CD8-positive, alpha-beta memory T cell (primary cell): ENCODE measurements at regions of chr4 and their contacts with region 1.

Region 1: GRCh38 chr4:99949034-99949998 is 759 bp downstream of the H2AZ1 start:
- DNase-seq: peak; percentile 81 to 89 (median 85)
- H3K4me3 ChIP-seq: peak overlapping the region; percentile 98
- H3K4me3 Mint-ChIP-seq: no peak overlapping the region
- H3K27ac ChIP-seq: peak overlapping the region; percentile 88
- H3K27ac Mint-ChIP-seq: no peak overlapping the region
- H3K4me1 ChIP-seq: peaks cover 37% of the 10 kb centered on the region
- H3K4me1 Mint-ChIP-seq: peaks cover 31 to 37% (median 35%) of the 10 kb centered on the region in 3 donors
- H3K27me3 ChIP-seq: no peaks in the 10 kb centered on the region
- H3K27me3 Mint-ChIP-seq: no peaks in the 10 kb centered on the region

Region 2: DNA sequence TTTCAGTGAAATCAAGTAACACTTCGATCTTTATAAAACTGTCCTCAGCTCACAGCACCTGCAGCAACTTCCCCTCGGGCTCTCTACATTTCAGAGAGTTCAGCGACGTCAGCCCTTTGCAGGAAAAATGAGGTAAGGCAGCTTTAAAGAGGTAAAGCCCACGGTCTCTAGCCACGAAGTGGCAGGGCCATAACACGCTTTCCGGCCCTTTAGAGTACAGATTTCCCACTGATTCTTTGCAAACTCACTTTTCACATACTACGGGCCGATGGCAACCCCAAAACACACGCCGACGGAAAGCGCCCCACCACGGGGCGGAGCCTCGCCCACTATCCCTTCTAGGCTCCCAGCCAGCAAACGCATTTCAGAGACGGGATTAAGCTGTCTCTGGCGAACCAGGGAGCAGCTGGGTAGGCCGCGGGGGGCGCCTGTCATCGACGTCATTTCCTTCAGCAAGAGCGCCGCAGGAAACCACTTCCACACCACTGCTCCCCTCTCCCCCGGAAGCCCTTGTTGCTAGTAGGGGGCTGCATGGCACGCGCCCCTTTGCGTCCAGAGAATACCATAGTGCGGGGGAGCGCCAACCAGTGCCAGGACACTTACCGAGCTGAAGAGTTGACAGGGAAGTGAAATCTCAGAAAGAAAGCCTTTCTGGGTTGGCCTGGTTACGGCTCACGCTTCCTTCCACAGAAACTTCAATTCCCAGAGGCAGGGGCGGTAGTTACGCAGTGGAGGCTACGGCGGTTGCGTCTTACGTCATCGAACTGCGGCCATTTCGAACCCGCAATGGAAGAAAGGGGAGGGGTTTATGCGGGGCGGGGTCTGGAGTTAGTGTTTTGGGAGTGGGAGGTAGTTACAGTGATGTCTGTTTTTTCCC is 385.8 kb before region 1 on chr4 and contains the start of gene TRMT10A:
- CTCF ChIA-PET with region 1: interaction called, 24 read pairs
- POLR2A ChIA-PET with region 1: interaction called, 25 read pairs
- DNase-seq: peak; percentile 92 to 98 (median 97)
- H3K4me3 ChIP-seq: peak within 1 kb of the TSS; percentile 82
- H3K4me3 Mint-ChIP-seq: peak within 1 kb of the TSS; percentile 90 to 99 (median 96)
- H3K27ac ChIP-seq: peak within 1 kb of the TSS; percentile 97
- H3K27ac Mint-ChIP-seq: peak within 1 kb of the TSS; percentile 98 to 100 (median 100)
- H3K4me1 ChIP-seq: peaks cover 9% of the 10 kb centered on the region
- H3K4me1 Mint-ChIP-seq: peaks cover 22 to 26% (median 24%) of the 10 kb centered on the region in 3 donors
- H3K27me3 ChIP-seq: peaks cover 4% of the 10 kb centered on the region
- H3K27me3 Mint-ChIP-seq: peaks cover 13 to 28% of the 10 kb centered on the region in 2 donors
- total RNA-seq, gene TRMT10A: 8.1 to 10.1 TPM

Region 3: GRCh38 chr4:99615170-99615820 is 334.0 kb before region 1 on chr4:
- CTCF ChIA-PET with region 1: no interaction called
- POLR2A ChIA-PET with region 1: no interaction called
- DNase-seq: no peak
- H3K4me3 ChIP-seq: no peak overlapping the region
- H3K4me3 Mint-ChIP-seq: no peak overlapping the region
- H3K27ac ChIP-seq: no peak overlapping the region
- H3K27ac Mint-ChIP-seq: no peak overlapping the region
- H3K4me1 ChIP-seq: no peaks in the 10 kb centered on the region
- H3K4me1 Mint-ChIP-seq: no peaks in the 10 kb centered on the region
- H3K27me3 ChIP-seq: no peaks in the 10 kb centered on the region
- H3K27me3 Mint-ChIP-seq: peaks cover 7 to 59% of the 10 kb centered on the region in 2 donors

Region 4: GRCh38 chr4:99816545-99817308 is 132.6 kb before region 1 on chr4 and contains the start of gene DAPP1:
- CTCF ChIA-PET with region 1: interaction called, 35 read pairs
- POLR2A ChIA-PET with region 1: interaction called, 10 read pairs
- DNase-seq: peak; percentile 52 to 84 (median 80)
- H3K4me3 ChIP-seq: peak within 1 kb of the TSS; percentile 59
- H3K4me3 Mint-ChIP-seq: peak within 1 kb of the TSS; percentile 90 to 93 (median 92)
- H3K27ac ChIP-seq: peak within 1 kb of the TSS; percentile 13
- H3K27ac Mint-ChIP-seq: peak within 1 kb of the TSS; percentile 86 to 96 (median 94)
- H3K4me1 ChIP-seq: peaks cover 41% of the 10 kb centered on the region
- H3K4me1 Mint-ChIP-seq: peaks cover 49 to 62% (median 58%) of the 10 kb centered on the region in 3 donors
- H3K27me3 ChIP-seq: no peaks in the 10 kb centered on the region
- H3K27me3 Mint-ChIP-seq: no peaks in the 10 kb centered on the region
- total RNA-seq, gene DAPP1: 18.8 to 20.9 TPM

Region 5: GRCh38 chr4:99894161-99894997 is 54.9 kb before region 1 on chr4 and contains the start of gene LAMTOR3:
- CTCF ChIA-PET with region 1: interaction called, 36 read pairs
- POLR2A ChIA-PET with region 1: interaction called, 33 read pairs
- DNase-seq: peak; percentile 84 to 93 (median 88)
- H3K4me3 ChIP-seq: peak within 1 kb of the TSS; percentile 88
- H3K4me3 Mint-ChIP-seq: peak within 1 kb of the TSS; percentile 96 to 100 (median 98)
- H3K27ac ChIP-seq: peak within 1 kb of the TSS; percentile 87
- H3K27ac Mint-ChIP-seq: peak within 1 kb of the TSS; percentile 91 to 100 (median 99)
- H3K4me1 ChIP-seq: peaks cover 20% of the 10 kb centered on the region
- H3K4me1 Mint-ChIP-seq: peaks cover 39 to 52% (median 49%) of the 10 kb centered on the region in 3 donors
- H3K27me3 ChIP-seq: no peaks in the 10 kb centered on the region
- H3K27me3 Mint-ChIP-seq: no peaks in the 10 kb centered on the region
- total RNA-seq, gene LAMTOR3: 35.7 to 37.9 TPM